Ovary (tissue), 10 donors: ENCODE measurements at regions of chr19 and their contacts with region 1.

Region 1: DNA sequence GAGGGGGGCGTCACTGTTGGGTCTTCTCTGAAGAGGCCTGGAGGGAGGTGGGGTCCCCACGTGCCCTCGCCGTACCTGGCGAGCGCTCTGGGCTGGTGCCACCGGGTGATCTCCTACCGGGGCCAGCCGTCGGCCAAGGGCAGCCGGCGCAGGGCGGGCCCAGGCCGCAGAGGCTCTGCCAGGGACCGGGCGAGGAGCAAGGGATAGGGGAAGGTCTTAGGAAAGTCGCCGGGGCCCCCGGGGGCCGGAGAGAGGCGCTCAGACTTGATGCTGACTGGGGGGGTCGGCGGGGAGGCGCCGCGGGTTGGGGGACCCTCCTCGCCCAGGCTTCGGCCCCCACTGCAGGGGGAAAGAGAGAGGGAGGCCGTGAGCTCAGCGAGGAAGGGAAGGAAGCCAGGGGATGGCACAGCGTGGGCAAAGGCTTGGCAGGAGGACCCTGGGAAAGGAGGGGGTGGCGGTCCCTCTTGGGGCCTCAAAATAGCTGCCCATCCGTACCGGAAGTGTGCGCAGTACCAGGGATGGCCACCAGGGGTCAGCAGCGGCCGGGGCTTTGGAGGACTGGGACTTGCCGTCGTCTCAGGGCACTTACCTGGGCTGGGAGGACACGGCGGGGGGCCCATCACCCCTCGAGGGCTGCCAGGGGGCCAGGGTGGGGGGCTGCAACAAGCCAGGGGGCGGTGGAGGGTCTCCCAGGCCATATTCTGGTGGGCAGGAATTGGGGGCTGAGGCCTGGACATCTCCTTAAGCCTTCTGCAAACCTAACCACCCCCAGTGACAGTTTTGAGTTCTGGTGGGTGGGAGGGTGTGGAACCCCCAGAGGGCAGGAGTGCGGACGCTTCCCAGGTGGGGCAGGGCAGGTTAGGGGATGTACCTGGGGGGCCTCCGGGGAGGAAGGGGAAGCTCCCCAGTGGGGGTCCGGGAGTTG is 7.7 kb upstream of the TMEM161A start:
- DNase-seq: peak; percentile 62 to 90 (median 85)
- H3K4me3 ChIP-seq: no peak overlapping the region
- H3K27ac ChIP-seq: no peak overlapping the region
- H3K4me1 ChIP-seq: no peaks in the 10 kb centered on the region
- H3K27me3 ChIP-seq: no peaks in the 10 kb centered on the region
- CTCF ChIP-seq: peak; percentile 89 to 93 (median 89)
- EP300 ChIP-seq: no peak
- POLR2A ChIP-seq: no peak

Region 2: GRCh38 chr19:19354932-19355331 is 209.0 kb after region 1 on chr19:
- intact Hi-C with region 1: loop called in 1 of 4 experiments (anchors 10 kb)
- DNase-seq: no peak
- H3K4me3 ChIP-seq: no peak overlapping the region
- H3K27ac ChIP-seq: no peak overlapping the region
- H3K4me1 ChIP-seq: no peaks in the 10 kb centered on the region
- H3K27me3 ChIP-seq: no peaks in the 10 kb centered on the region
- CTCF ChIP-seq: no peak
- EP300 ChIP-seq: no peak
- POLR2A ChIP-seq: no peak